PC-9 (cell line): ENCODE measurements at regions of chr19 and their contacts with region 1.

Region 1: GRCh38 chr19:17305517-17306284 is at the start of gene MRPL34:
- DNase-seq: peak; percentile 99 to 100
- H3K4me3 ChIP-seq: peak within 1 kb of the TSS; percentile 78
- H3K27ac ChIP-seq: peak within 1 kb of the TSS; percentile 30; the same call in 1 of the 2 replicates
- H3K4me1 ChIP-seq: peaks cover 45% of the 10 kb centered on the region
- H3K27me3 ChIP-seq: no peaks in the 10 kb centered on the region
- CTCF ChIP-seq: peak; percentile 78
- total RNA-seq, gene MRPL34: 64.8 and 70.8 TPM in 2 replicates

Region 2: GRCh38 chr19:16821094-16821493 is 484.6 kb before region 1 on chr19:
- CTCF ChIA-PET with region 1: no interaction called
- POLR2A ChIA-PET with region 1: interaction called, 29 read pairs
- intact Hi-C with region 1: no loop called
- DNase-seq: peak; percentile 52 to 79
- H3K4me3 ChIP-seq: no peak overlapping the region
- H3K27ac ChIP-seq: peak overlapping the region; percentile 94
- H3K4me1 ChIP-seq: peaks cover 81% of the 10 kb centered on the region
- H3K27me3 ChIP-seq: no peaks in the 10 kb centered on the region
- CTCF ChIP-seq: no peak

Region 3: GRCh38 chr19:17041976-17042375 is 263.7 kb before region 1 on chr19:
- CTCF ChIA-PET with region 1: no interaction called
- POLR2A ChIA-PET with region 1: no interaction called
- intact Hi-C with region 1: no loop called
- DNase-seq: no peak
- H3K4me3 ChIP-seq: no peak overlapping the region
- H3K27ac ChIP-seq: no peak overlapping the region
- H3K4me1 ChIP-seq: no peaks in the 10 kb centered on the region
- H3K27me3 ChIP-seq: no peaks in the 10 kb centered on the region
- CTCF ChIP-seq: no peak

Region 4: DNA sequence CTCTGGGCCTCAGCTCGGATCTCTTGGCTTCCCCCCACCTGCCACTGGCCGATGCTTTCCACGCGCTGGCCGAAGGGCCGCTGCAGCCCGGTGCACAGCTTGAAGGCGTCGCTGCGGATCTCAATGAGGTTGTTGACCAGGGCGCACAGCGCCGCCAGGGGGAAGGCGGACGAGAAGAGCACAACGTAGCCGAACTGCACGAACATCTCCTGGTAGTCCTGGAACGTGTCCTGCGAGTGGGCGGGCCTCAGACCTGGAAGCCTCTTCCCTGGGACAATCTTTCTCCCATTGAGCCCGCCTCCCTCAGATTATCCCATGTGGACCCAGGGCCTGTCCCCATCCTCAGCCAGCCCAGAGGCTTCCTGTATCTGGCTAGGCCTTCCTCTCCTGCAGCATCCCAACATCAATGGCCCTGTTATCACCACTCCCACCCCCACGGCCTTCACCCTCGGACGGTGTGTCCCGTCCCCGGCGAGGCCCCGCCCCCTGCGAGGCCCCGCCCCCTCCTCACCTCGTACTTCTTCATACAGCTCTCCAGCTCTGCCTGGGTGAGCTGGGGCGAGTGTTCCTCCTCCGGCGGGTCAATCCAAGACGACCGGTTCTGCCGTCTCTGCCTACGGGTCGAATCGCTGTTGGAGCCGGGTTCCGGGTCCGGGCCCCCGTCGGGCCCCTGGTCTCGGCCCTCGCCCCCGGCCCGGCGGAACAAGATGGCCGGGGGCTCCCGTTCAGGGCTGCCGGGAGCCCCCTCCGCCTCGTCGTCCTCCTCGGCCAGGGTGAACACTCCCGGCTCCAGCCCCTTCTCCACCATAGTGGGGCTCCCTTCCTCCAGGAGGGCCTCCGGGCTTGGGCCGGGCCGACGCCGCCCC is 22.2 kb after region 1 on chr19:
- CTCF ChIA-PET with region 1: no interaction called
- POLR2A ChIA-PET with region 1: interaction called, 11 read pairs
- intact Hi-C with region 1: loop called (anchors 1 kb)
- DNase-seq: peak; percentile 86 to 87
- H3K4me3 ChIP-seq: peak overlapping the region; percentile 79
- H3K27ac ChIP-seq: peak overlapping the region; percentile 33; the same call in 1 of the 2 replicates
- H3K4me1 ChIP-seq: peaks cover 23% of the 10 kb centered on the region
- H3K27me3 ChIP-seq: no peaks in the 10 kb centered on the region
- CTCF ChIP-seq: peak; percentile 70

Region 5: GRCh38 chr19:17385878-17386611 is 80.3 kb after region 1 on chr19:
- CTCF ChIA-PET with region 1: interaction called, 4 read pairs
- POLR2A ChIA-PET with region 1: no interaction called
- intact Hi-C with region 1: loop called (anchors 2 kb)
- DNase-seq: peak in 1 of 2 experiments; percentile 55
- H3K4me3 ChIP-seq: no peak overlapping the region
- H3K27ac ChIP-seq: no peak overlapping the region
- H3K4me1 ChIP-seq: peaks cover 9% of the 10 kb centered on the region
- H3K27me3 ChIP-seq: no peaks in the 10 kb centered on the region
- CTCF ChIP-seq: peak; percentile 97

Region 6: DNA sequence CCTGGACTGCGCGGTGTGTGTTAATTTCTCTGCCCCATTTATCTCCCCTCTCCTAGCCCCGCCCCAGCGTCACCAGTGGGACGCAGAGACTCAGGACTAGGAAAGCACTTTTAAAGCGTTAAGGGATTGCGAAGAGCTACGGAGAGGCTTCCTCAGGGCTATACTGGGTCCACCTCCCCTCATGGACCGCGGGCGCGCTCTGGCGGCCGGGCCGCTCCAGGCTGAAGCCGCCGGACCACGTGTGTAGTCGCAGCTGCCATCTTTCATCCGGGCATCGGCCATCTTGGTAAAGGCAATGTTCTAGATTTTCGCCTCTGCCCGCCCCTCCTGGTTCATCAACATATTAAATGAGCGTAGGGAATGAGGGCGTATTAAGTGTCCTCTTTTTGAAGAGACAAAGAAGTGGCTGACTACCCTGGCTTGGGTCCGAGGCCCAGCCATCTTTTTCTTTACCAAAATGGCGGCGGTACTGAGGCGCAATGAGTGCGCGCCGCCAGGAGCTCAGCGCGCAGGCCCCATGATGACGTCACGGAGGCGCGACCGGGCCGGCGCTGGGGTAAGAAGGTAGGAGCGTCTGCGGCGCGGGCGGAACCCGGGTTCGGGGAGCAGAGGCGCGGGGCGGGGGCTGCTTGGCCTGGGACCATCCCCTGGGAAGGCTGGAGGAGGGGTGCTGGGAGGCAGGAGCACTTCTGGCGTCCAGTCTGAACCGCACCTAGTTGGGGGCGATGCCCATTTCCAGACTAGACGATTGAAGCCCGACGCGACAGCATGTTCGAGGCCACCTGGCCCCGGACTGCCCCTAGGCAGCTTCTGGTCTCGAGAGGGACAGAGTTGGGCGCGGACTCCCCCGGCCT is 627.0 kb after region 1 on chr19 and contains the start of gene CCDC124:
- CTCF ChIA-PET with region 1: no interaction called
- POLR2A ChIA-PET with region 1: interaction called, 3 read pairs
- intact Hi-C with region 1: loop called (anchors 5 kb)
- DNase-seq: peak; percentile 85 to 94
- H3K4me3 ChIP-seq: peak within 1 kb of the TSS; percentile 87
- H3K27ac ChIP-seq: peak within 1 kb of the TSS; percentile 86
- H3K4me1 ChIP-seq: peaks cover 12% of the 10 kb centered on the region
- H3K27me3 ChIP-seq: no peaks in the 10 kb centered on the region
- CTCF ChIP-seq: peak; percentile 95
- total RNA-seq, gene CCDC124: 114 and 118 TPM in 2 replicates